ENCODE measurements at regions of chr20 and their contacts with region 1.

Region 1: GRCh38 chr20:3820048-3820900 is at the start of gene AP5S1:
- DNase-seq: peak; percentile 99
- ATAC-seq: peak; percentile 80
- H3K4me3 Mint-ChIP-seq: peak within 1 kb of the TSS; percentile 78
- H3K27ac Mint-ChIP-seq: peak within 1 kb of the TSS; percentile 97
- H3K4me1 Mint-ChIP-seq: peaks cover 28% of the 10 kb centered on the region
- H3K27me3 Mint-ChIP-seq: no peaks in the 10 kb centered on the region
- CTCF ChIP-seq: peak; percentile 94
- total RNA-seq, gene AP5S1: 2.8 to 4.1 TPM (median 3.1 TPM) in 3 replicates

Region 2: DNA sequence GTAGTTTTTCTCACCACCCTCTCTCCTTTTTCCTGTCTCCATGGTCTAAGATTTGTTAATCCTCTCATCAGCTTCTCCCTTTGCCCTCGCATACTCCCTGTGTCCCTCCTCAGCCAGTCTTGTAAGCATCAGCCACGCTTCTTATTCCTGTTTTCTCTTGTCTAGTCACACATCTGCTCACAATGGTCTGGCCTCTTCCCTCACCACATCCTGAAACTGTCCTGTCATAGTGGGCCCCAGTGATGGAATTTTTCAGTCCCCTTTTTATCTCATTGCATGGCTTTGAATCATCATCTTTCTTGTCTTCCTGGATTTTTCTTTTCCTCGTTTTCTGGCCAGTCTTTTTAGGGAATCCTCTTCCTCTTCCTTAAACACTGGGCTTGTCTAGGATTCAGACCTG is 214.3 kb before region 1 on chr20:
- CTCF ChIA-PET with region 1: no interaction called
- POLR2A ChIA-PET with region 1: no interaction called
- DNase-seq: no peak
- ATAC-seq: no peak
- H3K4me3 Mint-ChIP-seq: no peak overlapping the region
- H3K27ac Mint-ChIP-seq: peak overlapping the region; percentile 8; the same call in 1 of the 2 replicates
- H3K4me1 Mint-ChIP-seq: no peaks in the 10 kb centered on the region
- H3K27me3 Mint-ChIP-seq: no peaks in the 10 kb centered on the region
- CTCF ChIP-seq: no peak

Region 3: DNA sequence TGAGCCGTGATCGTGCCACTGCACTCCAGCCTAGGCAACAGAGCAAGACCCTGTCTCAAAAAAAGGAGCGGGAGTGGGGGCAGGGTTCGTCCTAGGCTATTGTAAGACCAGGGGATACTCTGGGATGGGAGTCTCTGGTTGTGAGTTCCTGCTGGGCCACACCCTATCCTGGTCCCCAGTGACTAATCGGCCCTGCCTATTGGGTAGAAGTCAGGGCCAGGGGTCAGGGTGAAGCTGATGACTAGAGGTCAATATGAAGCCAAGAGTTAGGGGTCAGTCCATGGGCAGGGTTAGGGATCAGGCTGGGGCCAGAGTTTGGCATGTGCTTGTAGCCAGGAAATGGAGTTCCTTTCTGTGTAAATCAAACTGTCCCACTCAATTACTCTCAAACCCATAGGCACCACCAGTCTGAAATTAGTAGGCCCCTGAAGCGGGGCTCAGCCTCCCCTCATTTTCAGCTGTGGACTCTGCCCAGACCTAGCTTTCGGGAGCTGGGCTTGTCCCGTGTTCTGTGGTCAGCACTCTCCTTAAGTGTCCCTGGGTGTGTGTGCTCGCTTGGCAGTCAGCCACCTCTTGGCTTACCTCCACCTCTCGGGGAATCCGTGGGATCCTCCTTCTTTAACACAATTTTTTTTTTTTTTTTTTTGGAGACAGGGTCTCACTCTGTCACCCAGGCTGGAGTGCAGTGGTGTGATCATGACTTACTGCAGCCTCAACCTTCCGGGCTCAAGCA is 86.0 kb before region 1 on chr20:
- CTCF ChIA-PET with region 1: no interaction called
- POLR2A ChIA-PET with region 1: no interaction called
- DNase-seq: no peak
- ATAC-seq: no peak
- H3K4me3 Mint-ChIP-seq: no peak overlapping the region
- H3K27ac Mint-ChIP-seq: no peak overlapping the region
- H3K4me1 Mint-ChIP-seq: peaks cover 28% of the 10 kb centered on the region
- H3K27me3 Mint-ChIP-seq: peaks cover 33% of the 10 kb centered on the region
- CTCF ChIP-seq: no peak

Region 4: DNA sequence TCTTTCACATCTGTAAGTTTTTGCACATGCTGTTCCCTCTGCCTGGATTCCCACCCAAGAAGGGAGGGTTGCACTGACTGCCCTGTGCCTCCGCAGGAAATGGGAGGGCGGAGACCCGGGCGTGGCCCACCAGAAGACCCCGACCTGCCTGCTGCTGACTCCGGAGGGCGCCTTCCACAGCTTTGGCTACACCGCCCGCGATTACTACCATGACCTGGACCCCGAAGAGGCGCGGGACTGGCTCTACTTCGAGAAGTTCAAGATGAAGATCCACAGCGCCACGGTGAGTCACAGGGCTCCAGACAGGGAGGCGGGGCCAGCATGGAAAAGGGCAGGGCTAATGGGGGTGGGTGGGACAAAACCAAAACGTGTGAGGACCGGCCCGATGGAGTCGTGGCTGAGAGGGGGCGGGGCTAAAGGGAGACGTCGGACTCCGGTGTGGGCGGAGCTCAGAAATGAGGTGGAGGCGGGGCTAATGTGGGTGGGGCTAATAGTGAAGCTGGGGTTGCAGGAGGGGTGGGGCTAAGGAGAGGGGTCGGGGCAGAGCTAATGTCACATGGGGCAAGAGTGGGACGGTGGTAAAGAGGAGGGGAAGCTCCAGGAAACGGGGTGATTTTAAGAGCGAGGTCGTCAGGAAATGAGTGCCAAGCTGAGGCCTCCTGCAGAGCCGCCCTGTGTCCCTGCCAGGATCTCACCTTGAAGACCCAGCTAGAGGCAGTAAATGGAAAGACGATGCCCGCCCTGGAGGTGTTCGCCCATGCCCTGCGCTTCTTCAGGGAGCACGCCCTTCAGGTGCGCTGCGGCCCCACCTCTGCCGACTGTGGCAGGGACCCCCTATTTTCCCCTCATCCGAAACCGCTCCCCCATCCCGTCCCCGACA is 75.2 kb before region 1 on chr20:
- CTCF ChIA-PET with region 1: interaction called, 30 read pairs
- POLR2A ChIA-PET with region 1: interaction called, 7 read pairs
- DNase-seq: peak; percentile 100
- ATAC-seq: peak; percentile 85
- H3K4me3 Mint-ChIP-seq: peak overlapping the region; percentile 89
- H3K27ac Mint-ChIP-seq: peak overlapping the region; percentile 88
- H3K4me1 Mint-ChIP-seq: peaks cover 21% of the 10 kb centered on the region
- H3K27me3 Mint-ChIP-seq: peaks cover 44% of the 10 kb centered on the region
- CTCF ChIP-seq: no peak

Region 5: DNA sequence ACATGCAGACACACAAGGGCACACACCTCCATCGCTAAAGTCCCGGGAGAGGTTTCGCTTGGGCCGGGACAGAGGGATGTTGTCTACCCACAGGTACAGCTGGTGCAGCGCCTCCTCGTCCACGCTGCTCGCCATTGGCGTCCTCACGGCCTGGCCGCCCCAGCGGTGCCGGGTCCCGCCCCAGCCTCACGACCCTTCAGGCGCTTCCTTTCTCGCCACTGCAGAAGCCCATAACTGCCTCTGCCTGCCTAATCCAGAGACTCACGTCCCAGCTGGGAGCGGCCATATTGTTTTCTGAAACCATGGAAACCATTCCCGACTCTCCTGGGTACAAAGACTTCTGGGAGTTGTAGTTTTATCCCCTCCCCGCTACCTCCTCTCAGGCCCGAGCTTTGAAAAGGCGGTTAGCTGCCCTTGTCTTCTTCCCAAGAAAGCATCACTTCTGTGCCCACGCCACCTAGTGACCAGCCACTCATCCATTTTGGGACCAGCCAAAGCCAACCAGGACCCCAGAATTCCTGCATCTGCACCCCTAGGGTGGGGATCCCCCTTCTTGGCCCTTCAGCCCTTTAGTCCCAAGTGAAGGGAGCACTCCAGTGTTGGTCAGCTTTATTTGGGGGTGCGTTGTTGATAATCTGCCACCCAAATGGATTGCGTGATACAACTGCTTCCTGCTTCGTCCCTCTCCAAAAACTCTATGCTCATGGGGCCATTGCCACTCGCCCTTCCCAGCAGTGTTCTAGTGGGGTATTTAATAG is 38.9 kb before region 1 on chr20 and contains the start of gene SPEF1:
- CTCF ChIA-PET with region 1: interaction called, 92 read pairs
- POLR2A ChIA-PET with region 1: interaction called, 3 read pairs
- DNase-seq: peak; percentile 83
- ATAC-seq: peak; percentile 58
- H3K4me3 Mint-ChIP-seq: peak within 1 kb of the TSS; percentile 67
- H3K27ac Mint-ChIP-seq: peak within 1 kb of the TSS; percentile 29; the same call in 1 of the 2 replicates
- H3K4me1 Mint-ChIP-seq: peaks cover 45% of the 10 kb centered on the region
- H3K27me3 Mint-ChIP-seq: peaks cover 42% of the 10 kb centered on the region
- CTCF ChIP-seq: no peak
- total RNA-seq, gene SPEF1: 0.41 to 0.72 TPM (median 0.64 TPM) in 3 replicates

Region 6: GRCh38 chr20:3786665-3787323 is 33.5 kb before region 1 on chr20 and contains the start of gene CENPB:
- CTCF ChIA-PET with region 1: interaction called, 92 read pairs
- POLR2A ChIA-PET with region 1: interaction called, 4 read pairs
- DNase-seq: peak; percentile 89
- ATAC-seq: peak; percentile 81
- H3K4me3 Mint-ChIP-seq: peak within 1 kb of the TSS; percentile 83
- H3K27ac Mint-ChIP-seq: no peak within 1 kb of the TSS
- H3K4me1 Mint-ChIP-seq: peaks cover 20% of the 10 kb centered on the region
- H3K27me3 Mint-ChIP-seq: peaks cover 24% of the 10 kb centered on the region
- CTCF ChIP-seq: peak; percentile 65; the same call in 1 of the 2 replicates
- total RNA-seq, gene CENPB: 55.3 to 58.7 TPM (median 57.6 TPM) in 3 replicates

Region 7: DNA sequence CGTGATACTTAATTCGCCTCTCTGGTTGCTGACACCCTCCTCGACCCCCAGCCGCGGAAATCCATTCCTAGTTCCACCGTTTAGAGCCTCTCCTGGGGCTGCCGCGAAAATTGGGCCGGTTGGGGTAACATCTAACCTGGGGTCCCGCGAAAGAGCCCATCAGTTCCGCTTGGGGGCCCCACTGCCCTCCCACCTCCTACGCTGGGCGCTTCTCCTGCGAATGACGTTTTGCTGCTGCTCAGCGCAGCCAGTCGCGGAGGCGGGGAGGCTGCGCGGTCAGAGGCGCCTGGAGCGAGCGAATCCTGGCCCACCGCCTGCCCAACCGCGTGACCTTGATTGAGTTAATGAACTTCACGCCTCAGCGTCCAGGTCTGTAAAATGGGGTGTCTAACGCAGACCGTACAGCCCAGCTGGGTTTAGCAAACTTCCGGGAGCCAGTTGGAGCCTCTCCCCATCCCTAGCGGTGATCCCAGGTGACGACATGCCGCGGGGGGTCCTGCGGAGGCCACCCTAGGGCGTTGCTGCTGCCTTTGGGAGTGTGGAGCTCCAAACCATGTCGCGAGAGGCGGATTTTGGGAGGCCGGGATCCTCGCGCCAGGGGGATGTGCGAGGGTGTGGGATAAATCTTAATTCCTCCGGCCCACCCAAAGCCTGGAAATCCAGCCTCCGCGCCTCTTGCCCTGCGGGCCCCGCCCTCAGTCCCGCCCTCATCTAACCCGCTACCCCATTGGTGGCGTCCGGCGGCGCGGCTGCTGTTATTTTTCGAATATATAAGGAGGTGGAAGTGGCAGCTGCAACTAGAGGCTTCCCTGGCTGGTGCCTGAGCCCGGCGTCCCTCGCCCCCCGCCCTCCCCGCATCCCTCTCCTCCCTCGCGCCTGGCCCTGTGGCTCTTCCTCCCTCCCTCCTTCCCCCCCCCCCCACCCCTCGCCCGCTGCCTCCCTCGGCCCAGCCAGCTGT is 24.5 kb before region 1 on chr20 and contains the start of gene CDC25B:
- CTCF ChIA-PET with region 1: interaction called, 92 read pairs
- POLR2A ChIA-PET with region 1: interaction called, 8 read pairs
- DNase-seq: peak; percentile 92
- ATAC-seq: peak; percentile 52
- H3K4me3 Mint-ChIP-seq: peak within 1 kb of the TSS; percentile 82
- H3K27ac Mint-ChIP-seq: peak within 1 kb of the TSS; percentile 84
- H3K4me1 Mint-ChIP-seq: peaks cover 47% of the 10 kb centered on the region
- H3K27me3 Mint-ChIP-seq: peaks cover 11% of the 10 kb centered on the region; the same call in 1 of the 2 replicates
- CTCF ChIP-seq: no peak
- total RNA-seq, gene CDC25B: 35.2 to 37.5 TPM (median 37.4 TPM) in 3 replicates

Region 8: GRCh38 chr20:3854462-3854871 is 34.2 kb after region 1 on chr20:
- CTCF ChIA-PET with region 1: interaction called, 48 read pairs
- POLR2A ChIA-PET with region 1: interaction called, 5 read pairs
- DNase-seq: peak; percentile 22
- ATAC-seq: peak; percentile 71
- H3K4me3 Mint-ChIP-seq: no peak overlapping the region
- H3K27ac Mint-ChIP-seq: peak overlapping the region; percentile 36; the same call in 1 of the 2 replicates
- H3K4me1 Mint-ChIP-seq: peaks cover 3% of the 10 kb centered on the region; the same call in 1 of the 2 replicates
- H3K27me3 Mint-ChIP-seq: no peaks in the 10 kb centered on the region
- CTCF ChIP-seq: no peak